Cardiac septum (tissue), 1 donor: ENCODE measurements at regions of chr10 and their contacts with region 1.

Region 1: DNA sequence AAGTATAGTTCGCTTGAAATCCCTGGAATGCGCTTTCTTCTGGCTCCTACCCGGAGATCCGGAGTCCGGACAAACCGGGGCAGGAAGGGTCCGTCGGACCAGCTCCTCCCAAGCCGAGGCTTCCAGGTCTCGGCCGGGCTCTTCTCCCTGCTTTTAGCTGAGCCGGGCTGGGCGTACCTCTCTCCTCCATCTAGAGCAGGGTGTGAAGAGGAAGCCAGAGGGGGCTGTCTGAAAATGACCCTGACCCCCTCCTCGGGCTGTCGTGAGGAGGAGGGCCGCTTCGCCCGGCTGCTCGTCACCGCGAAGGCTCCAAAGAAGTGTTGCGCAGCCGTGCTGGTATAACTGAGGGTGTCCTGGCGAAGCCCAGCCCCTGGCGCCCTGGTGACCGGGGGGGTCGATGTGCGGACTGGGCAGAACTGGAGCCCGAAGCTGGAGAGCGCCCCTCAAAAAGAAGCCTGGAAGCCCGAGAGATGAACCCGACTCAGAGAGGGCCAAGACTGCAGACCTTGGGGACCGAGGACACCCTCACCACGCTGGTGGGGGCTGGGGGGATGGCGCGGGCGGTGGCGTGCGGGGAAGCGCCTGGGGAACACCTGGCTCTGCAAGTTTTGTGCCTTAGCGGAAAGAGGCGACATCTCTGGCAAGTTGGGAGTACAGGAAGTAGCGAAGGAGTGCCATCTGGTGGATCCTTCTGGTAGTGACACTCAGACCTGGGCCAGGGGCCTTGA is 5.7 kb downstream of the KAZALD1 start:
- DNase-seq: peak; percentile 85

Region 2: DNA sequence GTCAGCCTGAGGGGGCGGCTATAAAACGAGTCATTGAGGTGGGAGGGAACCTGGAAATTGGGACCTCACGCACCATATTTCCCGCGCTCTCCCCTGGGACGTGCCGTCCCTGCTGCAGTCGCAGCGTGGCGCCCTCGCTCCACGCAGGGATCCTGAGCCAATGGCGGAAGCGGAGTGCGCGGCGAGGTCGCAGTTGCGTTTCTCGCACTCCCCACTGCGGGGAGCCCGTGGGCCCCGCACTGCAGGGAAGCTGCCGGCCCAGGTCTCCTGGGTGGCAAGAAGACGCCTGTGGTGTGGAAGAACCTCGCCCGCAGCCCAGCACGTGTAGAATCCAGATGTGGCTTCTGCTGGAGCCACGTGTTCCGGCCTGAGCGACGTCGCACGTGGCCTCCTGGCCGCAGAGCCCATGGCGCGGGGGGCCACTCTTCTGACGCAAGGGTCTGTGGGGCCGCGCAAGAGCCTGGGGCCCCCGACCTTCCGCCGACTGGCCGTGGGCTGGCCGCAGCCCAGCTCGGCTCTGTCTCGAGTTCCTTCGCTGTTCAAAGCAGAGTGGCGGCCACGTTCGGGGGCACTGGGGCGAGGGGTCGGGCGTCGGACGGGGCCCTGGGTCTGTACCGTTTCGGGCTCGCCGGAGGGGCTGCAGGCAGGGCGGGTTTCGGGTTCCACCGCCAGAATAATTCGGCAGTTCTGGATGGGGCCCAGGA is 505.4 kb before region 1 on chr10:
- intact Hi-C with region 1: no loop called
- DNase-seq: peak; percentile 82

Region 3: DNA sequence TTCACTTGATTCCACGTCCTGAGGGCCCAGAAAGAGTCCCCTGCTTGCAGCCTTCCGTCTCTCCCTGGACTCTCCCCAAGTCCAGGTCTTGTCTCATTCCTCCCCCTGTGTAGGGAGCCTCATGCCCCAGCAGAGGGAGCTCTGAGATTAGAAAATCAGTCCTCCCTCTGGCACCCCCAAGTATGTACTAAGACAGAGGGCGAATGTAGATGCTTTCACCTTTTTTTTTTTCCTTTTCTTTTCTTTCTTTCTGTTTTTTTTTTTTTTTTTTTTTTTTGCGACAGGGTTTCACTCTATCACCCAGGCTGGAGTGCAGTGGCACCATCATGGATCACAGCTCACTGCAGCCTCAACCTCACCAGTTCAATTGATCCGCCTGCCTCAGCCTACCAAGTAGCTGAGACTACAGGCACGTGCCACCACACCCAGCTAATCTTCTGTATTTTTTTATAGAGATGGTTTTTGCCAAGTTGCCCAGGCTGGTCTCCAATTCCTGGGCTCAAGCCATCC is 26.2 kb before region 1 on chr10:
- intact Hi-C with region 1: loop called (anchors 1 kb)
- DNase-seq: no peak

Region 4: GRCh38 chr10:101182936-101183335 is 115.4 kb after region 1 on chr10:
- intact Hi-C with region 1: no loop called
- DNase-seq: no peak